GM10248 (cell line): ENCODE measurements at regions of chr1 and their contacts with region 1.

Region 1: GRCh38 chr1:62034790-62035189 is 159.9 kb upstream of the L1TD1 start:
- DNase-seq: no peak
- CTCF ChIP-seq: no peak

Region 2: GRCh38 chr1:62022382-62022983 is 12.3 kb before region 1 on chr1:
- CTCF ChIA-PET with region 1: interaction called, 12 read pairs
- POLR2A ChIA-PET with region 1: no interaction called
- DNase-seq: no peak
- CTCF ChIP-seq: no peak